Activated CD4-positive, alpha-beta memory T cell treated with anti-CD3 and anti-CD28 coated beads for 36 hours (primary cell): ENCODE measurements at regions of chr7 and their contacts with region 1.

Region 1: GRCh38 chr7:39453743-39454355 is 112.4 kb upstream of the YAE1 start:
- DNase-seq: peak; percentile 68
- H3K4me3 Mint-ChIP-seq: no peak overlapping the region
- H3K27ac Mint-ChIP-seq: no peak overlapping the region
- H3K4me1 Mint-ChIP-seq: no peaks in the 10 kb centered on the region
- H3K27me3 Mint-ChIP-seq: peaks cover 3% of the 10 kb centered on the region

Region 2: GRCh38 chr7:39465055-39465929 is 11.4 kb after region 1 on chr7:
- CTCF ChIA-PET with region 1: interaction called, 38 read pairs
- POLR2A ChIA-PET with region 1: no interaction called
- intact Hi-C with region 1: no loop called
- DNase-seq: peak; percentile 53
- H3K4me3 Mint-ChIP-seq: no peak overlapping the region
- H3K27ac Mint-ChIP-seq: no peak overlapping the region
- H3K4me1 Mint-ChIP-seq: no peaks in the 10 kb centered on the region
- H3K27me3 Mint-ChIP-seq: peaks cover 9% of the 10 kb centered on the region

Region 3: GRCh38 chr7:39517240-39517639 is 63.4 kb after region 1 on chr7:
- CTCF ChIA-PET with region 1: interaction called, 36 read pairs
- POLR2A ChIA-PET with region 1: no interaction called
- intact Hi-C with region 1: loop called (anchors 1 kb)
- DNase-seq: no peak
- H3K4me3 Mint-ChIP-seq: no peak overlapping the region
- H3K27ac Mint-ChIP-seq: no peak overlapping the region
- H3K4me1 Mint-ChIP-seq: no peaks in the 10 kb centered on the region
- H3K27me3 Mint-ChIP-seq: peaks cover 4% of the 10 kb centered on the region

Region 4: DNA sequence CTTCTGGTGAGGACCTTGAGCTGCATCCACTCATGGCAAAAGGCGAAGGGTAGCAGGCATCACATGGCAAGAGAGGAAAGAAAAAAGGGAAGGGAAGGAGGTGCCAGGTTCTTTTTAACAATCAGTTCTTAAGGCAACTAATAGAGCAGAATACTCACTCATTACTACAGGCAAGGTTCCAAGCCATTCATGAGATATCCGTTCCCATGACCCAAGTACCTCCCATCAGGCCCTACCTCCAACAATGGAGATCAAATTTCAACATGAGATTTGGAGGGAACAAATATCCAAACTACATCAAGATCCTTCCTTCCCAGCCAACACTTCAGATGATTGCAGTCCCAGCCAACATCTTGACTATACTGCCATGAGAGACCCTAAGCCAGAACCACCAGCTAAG is 73.4 kb after region 1 on chr7:
- CTCF ChIA-PET with region 1: interaction called, 36 read pairs
- POLR2A ChIA-PET with region 1: no interaction called
- intact Hi-C with region 1: no loop called
- DNase-seq: no peak
- H3K4me3 Mint-ChIP-seq: no peak overlapping the region
- H3K27ac Mint-ChIP-seq: no peak overlapping the region
- H3K4me1 Mint-ChIP-seq: no peaks in the 10 kb centered on the region
- H3K27me3 Mint-ChIP-seq: peaks cover 2% of the 10 kb centered on the region